PC-9 (cell line): ENCODE measurements at regions of chr2 and their contacts with region 1.

Region 1: GRCh38 chr2:219552382-219553167 is 8.7 kb downstream of the TMEM198 start:
- DNase-seq: peak; percentile 37 to 90
- H3K4me3 ChIP-seq: peak overlapping the region; percentile 57
- H3K27ac ChIP-seq: no peak overlapping the region
- H3K4me1 ChIP-seq: no peaks in the 10 kb centered on the region
- H3K27me3 ChIP-seq: no peaks in the 10 kb centered on the region
- CTCF ChIP-seq: no peak

Region 2: GRCh38 chr2:218343591-218343990 is 1209.0 kb before region 1 on chr2:
- CTCF ChIA-PET with region 1: interaction called, 13 read pairs
- POLR2A ChIA-PET with region 1: no interaction called
- intact Hi-C with region 1: no loop called
- DNase-seq: no peak
- H3K4me3 ChIP-seq: no peak overlapping the region
- H3K27ac ChIP-seq: no peak overlapping the region
- H3K4me1 ChIP-seq: no peaks in the 10 kb centered on the region
- H3K27me3 ChIP-seq: no peaks in the 10 kb centered on the region
- CTCF ChIP-seq: no peak

Region 3: GRCh38 chr2:219648176-219648575 is 95.6 kb after region 1 on chr2:
- CTCF ChIA-PET with region 1: no interaction called
- POLR2A ChIA-PET with region 1: interaction called, 17 read pairs
- intact Hi-C with region 1: no loop called
- DNase-seq: no peak
- H3K4me3 ChIP-seq: no peak overlapping the region
- H3K27ac ChIP-seq: no peak overlapping the region
- H3K4me1 ChIP-seq: peaks cover 12% of the 10 kb centered on the region
- H3K27me3 ChIP-seq: no peaks in the 10 kb centered on the region
- CTCF ChIP-seq: no peak